AG04449 (cell line): ENCODE measurements at regions of chr11 and their contacts with region 1.

Region 1: GRCh38 chr11:122215244-122215992 is 99.4 kb upstream of the BLID start:
- DNase-seq: peak; percentile 96
- H3K4me3 ChIP-seq: no peak overlapping the region
- CTCF ChIP-seq: peak; percentile 92

Region 2: GRCh38 chr11:122229481-122230384 is 14.3 kb after region 1 on chr11:
- CTCF ChIA-PET with region 1: interaction called, 94 read pairs
- POLR2A ChIA-PET with region 1: interaction called, 12 read pairs
- DNase-seq: no peak
- H3K4me3 ChIP-seq: no peak overlapping the region
- CTCF ChIP-seq: no peak

Region 3: DNA sequence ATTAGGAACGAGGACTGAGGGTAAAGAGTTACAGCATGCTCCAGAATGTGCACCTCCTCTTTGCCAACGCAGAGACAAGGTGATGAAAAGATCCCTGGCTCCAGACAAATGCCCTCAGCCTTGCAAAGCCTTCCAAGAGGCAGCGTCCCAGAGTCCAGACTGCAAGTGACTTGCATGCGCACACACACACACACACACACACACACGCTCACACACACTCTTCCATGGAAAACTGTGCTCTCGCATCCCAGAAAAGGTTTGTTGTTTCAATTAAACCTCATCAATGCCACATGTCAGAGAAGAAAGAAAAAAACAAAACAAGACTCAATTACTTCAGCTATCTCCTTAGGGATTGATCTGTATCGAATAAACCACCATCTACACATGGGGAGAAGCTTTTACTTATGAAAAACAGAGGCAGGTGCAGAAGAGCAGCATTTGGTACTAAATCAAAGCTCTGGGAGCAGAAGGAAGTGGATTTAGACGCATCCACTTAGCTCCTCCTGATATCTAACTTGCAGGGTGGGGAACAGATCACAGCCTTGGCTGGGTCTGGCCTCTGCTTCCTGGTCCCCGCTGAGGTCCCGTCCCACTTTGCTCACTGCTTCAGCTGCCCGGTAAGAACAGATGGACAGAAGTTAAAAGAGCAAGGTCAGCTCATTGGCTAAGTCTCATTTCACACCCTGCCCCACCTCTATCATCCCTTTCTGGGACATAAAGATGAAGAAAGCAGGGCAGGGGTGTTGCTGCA is 150.4 kb after region 1 on chr11:
- CTCF ChIA-PET with region 1: no interaction called
- POLR2A ChIA-PET with region 1: no interaction called
- DNase-seq: no peak
- H3K4me3 ChIP-seq: no peak overlapping the region
- CTCF ChIP-seq: no peak

Region 4: DNA sequence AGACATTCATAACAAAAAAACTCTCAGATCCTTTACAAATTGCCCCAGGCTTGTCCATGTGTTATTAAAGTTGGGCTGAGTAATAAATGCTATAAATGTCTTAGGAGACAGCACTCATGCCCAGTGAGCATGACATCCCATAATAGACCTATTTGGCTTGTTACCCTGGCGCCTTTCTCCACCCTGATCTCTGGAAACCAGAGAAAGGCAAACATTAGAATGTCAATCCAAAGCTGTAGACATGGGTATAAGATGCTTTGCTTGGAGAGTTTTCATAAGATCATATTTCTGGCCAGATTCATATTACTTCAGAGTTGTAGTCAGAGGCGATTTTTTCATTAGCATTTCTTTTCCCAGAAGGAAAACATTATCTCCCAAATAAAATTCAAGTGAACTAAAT is 278.8 kb after region 1 on chr11:
- CTCF ChIA-PET with region 1: interaction called, 11 read pairs
- POLR2A ChIA-PET with region 1: no interaction called
- DNase-seq: no peak
- H3K4me3 ChIP-seq: no peak overlapping the region
- CTCF ChIP-seq: no peak